Naive thymus-derived CD4-positive, alpha-beta T cell (primary cell): ENCODE measurements at regions of chr5 and their contacts with region 1.

Region 1: GRCh38 chr5:56200856-56201666 is 32.1 kb downstream of the ANKRD55 start:
- DNase-seq: peak; percentile 28 to 73 (median 59)
- ATAC-seq: peak; percentile 93
- H3K4me3 ChIP-seq: no peak overlapping the region
- H3K4me3 Mint-ChIP-seq: peak overlapping the region in 3 of 10 donors; percentile 2 to 27 (median 6)
- H3K27ac ChIP-seq: no peak overlapping the region
- H3K27ac Mint-ChIP-seq: peak overlapping the region in 7 of 9 donors; percentile 9 to 77 (median 63)
- H3K4me1 ChIP-seq: peaks cover 0 to 9% of the 10 kb centered on the region in 2 donors
- H3K4me1 Mint-ChIP-seq: peaks cover 17 to 34% (median 29%) of the 10 kb centered on the region in 7 donors
- H3K27me3 ChIP-seq: no peaks in the 10 kb centered on the region
- H3K27me3 Mint-ChIP-seq: no peaks in the 10 kb centered on the region

Region 2: GRCh38 chr5:55172051-55172899 is 1028.8 kb before region 1 on chr5:
- CTCF ChIA-PET with region 1: no interaction called
- POLR2A ChIA-PET with region 1: no interaction called
- intact Hi-C with region 1: loop called in 1 of 2 experiments (anchors 5 kb)
- DNase-seq: peak in 8 of 9 donors; percentile 53 to 81 (median 75)
- ATAC-seq: peak; percentile 80
- H3K4me3 ChIP-seq: peak overlapping the region; percentile 42
- H3K4me3 Mint-ChIP-seq: peak overlapping the region; percentile 78 to 93 (median 86)
- H3K27ac ChIP-seq: no peak overlapping the region
- H3K27ac Mint-ChIP-seq: peak overlapping the region in 4 of 9 donors; percentile 4 to 83 (median 57)
- H3K4me1 ChIP-seq: peaks cover 14 to 25% of the 10 kb centered on the region in 2 donors
- H3K4me1 Mint-ChIP-seq: peaks cover 23 to 45% (median 35%) of the 10 kb centered on the region in 7 donors
- H3K27me3 ChIP-seq: peaks cover 25 to 42% of the 10 kb centered on the region in 2 donors
- H3K27me3 Mint-ChIP-seq: peaks cover 73 to 88% (median 78%) of the 10 kb centered on the region in 5 donors

Region 3: DNA sequence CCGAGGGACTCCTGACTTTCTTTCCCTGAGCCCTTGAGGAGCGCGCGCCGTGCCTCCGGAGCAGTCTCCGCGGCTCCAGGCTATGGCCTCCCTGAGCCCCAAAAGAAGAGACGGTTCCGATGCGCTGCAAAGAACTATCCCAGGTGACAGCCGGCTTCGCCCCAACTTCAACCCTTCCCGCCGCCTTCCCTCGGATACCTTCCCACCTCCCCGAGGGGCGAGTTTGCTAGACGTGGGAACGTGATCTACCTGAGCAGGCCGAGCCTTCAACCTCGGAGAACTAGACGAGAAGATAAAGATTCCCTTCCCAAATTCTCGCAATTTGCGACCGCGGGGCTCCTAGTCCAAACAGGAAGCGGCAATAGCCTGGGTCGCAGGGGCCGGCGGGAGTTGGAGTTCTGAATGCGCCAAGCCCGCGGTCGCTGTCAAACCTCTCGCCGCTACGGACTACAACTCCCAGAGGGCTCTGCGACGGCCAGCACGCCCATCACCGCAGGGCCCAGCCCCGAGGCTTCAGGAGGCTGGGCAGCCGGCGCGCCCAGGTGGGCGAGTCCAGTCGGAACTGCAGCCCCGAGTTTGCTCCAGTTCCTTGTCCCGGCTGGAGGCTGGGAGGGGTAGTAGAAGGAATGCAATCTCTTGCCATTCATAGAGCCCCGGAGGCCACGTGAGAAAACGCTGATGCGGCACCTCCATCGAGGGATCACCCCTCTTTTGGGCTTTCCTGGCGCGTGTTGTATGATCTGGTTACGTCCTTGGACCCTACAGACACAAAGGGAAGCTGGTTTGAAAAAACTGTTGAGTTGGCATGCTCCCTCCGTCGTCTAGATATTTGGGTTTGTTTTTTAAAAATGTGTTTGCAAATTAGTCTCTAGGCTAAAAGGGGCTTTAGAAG is 488.8 kb before region 1 on chr5 and contains the start of gene SLC38A9:
- CTCF ChIA-PET with region 1: no interaction called
- POLR2A ChIA-PET with region 1: no interaction called
- intact Hi-C with region 1: loop called in 1 of 2 experiments (anchors 5 kb)
- DNase-seq: peak; percentile 82 to 91 (median 90)
- ATAC-seq: peak; percentile 100
- H3K4me3 ChIP-seq: peak within 1 kb of the TSS; percentile 87
- H3K4me3 Mint-ChIP-seq: peak within 1 kb of the TSS; percentile 94 to 99 (median 98)
- H3K27ac ChIP-seq: peak within 1 kb of the TSS; percentile 72
- H3K27ac Mint-ChIP-seq: peak within 1 kb of the TSS; percentile 76 to 97 (median 91)
- H3K4me1 ChIP-seq: peaks cover 12 to 16% of the 10 kb centered on the region in 2 donors
- H3K4me1 Mint-ChIP-seq: peaks cover 20 to 40% (median 29%) of the 10 kb centered on the region in 7 donors
- H3K27me3 ChIP-seq: no peaks in the 10 kb centered on the region
- H3K27me3 Mint-ChIP-seq: peaks cover 0 to 3% (median 0%) of the 10 kb centered on the region in 5 donors
- total RNA-seq, gene SLC38A9: 17.7 to 32.6 (median 30.4) TPM

Region 4: DNA sequence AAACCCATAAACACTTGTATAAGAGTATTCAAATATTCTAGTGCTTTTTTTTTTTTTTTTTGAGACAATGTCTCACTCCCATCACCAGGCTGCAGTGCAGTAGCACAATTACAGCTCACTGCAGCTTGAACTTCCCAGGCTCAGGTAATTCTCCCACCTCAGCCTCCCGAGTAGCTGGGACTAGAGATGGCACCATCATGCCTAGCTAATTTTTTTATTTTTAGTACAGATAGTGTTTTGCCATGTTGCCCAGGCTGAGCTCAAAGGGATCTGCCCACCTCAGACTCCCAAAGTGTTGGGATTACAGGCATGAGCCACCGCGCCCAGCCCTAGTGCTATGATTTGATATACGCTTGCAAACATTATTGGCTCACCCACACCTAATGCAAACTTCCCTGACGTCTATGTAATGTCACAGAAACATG is 218.1 kb before region 1 on chr5:
- CTCF ChIA-PET with region 1: interaction called, 120 read pairs
- POLR2A ChIA-PET with region 1: interaction called, 21 read pairs
- intact Hi-C with region 1: loop called (anchors 1 kb)
- DNase-seq: peak in 7 of 9 donors; percentile 42 to 63 (median 53)
- ATAC-seq: peak; percentile 46
- H3K4me3 ChIP-seq: peak overlapping the region; percentile 44
- H3K4me3 Mint-ChIP-seq: peak overlapping the region; percentile 48 to 96 (median 84)
- H3K27ac ChIP-seq: peak overlapping the region; percentile 67
- H3K27ac Mint-ChIP-seq: peak overlapping the region; percentile 24 to 98 (median 85)
- H3K4me1 ChIP-seq: peaks cover 0 to 63% of the 10 kb centered on the region in 2 donors
- H3K4me1 Mint-ChIP-seq: peaks cover 37 to 94% (median 84%) of the 10 kb centered on the region in 7 donors
- H3K27me3 ChIP-seq: no peaks in the 10 kb centered on the region
- H3K27me3 Mint-ChIP-seq: no peaks in the 10 kb centered on the region

Region 5: GRCh38 chr5:56056875-56057274 is 144.2 kb before region 1 on chr5:
- CTCF ChIA-PET with region 1: interaction called, 5 read pairs
- POLR2A ChIA-PET with region 1: no interaction called
- intact Hi-C with region 1: loop called in 1 of 2 experiments (anchors 5 kb)
- DNase-seq: no peak
- ATAC-seq: no peak
- H3K4me3 ChIP-seq: peak overlapping the region; percentile 21
- H3K4me3 Mint-ChIP-seq: peak overlapping the region in 8 of 10 donors; percentile 55 to 83 (median 68)
- H3K27ac ChIP-seq: peak overlapping the region; percentile 60
- H3K27ac Mint-ChIP-seq: peak overlapping the region; percentile 44 to 99 (median 90)
- H3K4me1 ChIP-seq: peaks cover 8 to 96% of the 10 kb centered on the region in 2 donors
- H3K4me1 Mint-ChIP-seq: peaks cover 52 to 94% (median 76%) of the 10 kb centered on the region in 7 donors
- H3K27me3 ChIP-seq: no peaks in the 10 kb centered on the region
- H3K27me3 Mint-ChIP-seq: peaks cover 0 to 6% (median 0%) of the 10 kb centered on the region in 5 donors

Region 6: DNA sequence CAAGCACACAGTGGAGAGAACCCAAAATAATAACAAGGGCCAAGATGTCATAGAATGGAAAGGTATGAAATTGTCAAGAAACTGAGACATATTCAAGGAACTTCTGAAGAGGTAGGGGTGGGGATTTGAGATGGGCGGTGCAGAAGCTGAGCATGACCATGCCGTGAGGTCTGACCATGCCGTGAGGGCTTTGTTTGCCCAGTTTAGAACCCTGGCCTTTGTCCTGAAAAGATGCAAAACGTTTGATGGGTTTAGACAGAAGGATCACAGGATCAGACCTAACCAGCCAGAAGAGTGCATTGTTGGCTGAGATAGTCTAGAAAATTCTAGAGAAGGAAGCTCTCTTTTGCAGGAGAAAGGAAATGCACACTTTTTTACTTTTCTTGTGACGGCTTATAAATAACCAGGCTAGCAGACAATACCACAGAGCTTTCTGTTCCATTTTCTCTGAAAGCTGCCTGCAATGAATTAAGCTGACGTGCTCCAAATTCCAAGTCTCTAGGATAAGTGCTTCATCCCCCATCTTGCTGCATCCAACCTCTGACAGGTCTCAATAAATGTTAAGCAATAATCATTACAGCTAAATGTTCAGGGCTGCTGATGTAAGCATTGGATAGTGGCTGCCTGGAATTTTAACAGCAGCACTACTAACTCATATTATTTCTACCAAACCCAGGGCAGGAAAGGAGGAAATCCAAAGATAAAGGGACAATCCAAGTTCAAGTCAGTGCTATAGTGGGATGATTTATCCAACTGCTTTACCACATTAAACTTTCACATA is 95.4 kb before region 1 on chr5:
- CTCF ChIA-PET with region 1: interaction called, 23 read pairs
- POLR2A ChIA-PET with region 1: interaction called, 6 read pairs
- intact Hi-C with region 1: loop called in 1 of 2 experiments (anchors 2 kb)
- DNase-seq: peak in 2 of 9 donors; percentile 24 to 44
- ATAC-seq: no peak
- H3K4me3 ChIP-seq: no peak overlapping the region
- H3K4me3 Mint-ChIP-seq: peak overlapping the region; percentile 49 to 85 (median 70)
- H3K27ac ChIP-seq: peak overlapping the region; percentile 56
- H3K27ac Mint-ChIP-seq: peak overlapping the region; percentile 70 to 100 (median 90)
- H3K4me1 ChIP-seq: peaks cover 0 to 60% of the 10 kb centered on the region in 2 donors
- H3K4me1 Mint-ChIP-seq: peaks cover 33 to 95% (median 73%) of the 10 kb centered on the region in 7 donors
- H3K27me3 ChIP-seq: no peaks in the 10 kb centered on the region
- H3K27me3 Mint-ChIP-seq: no peaks in the 10 kb centered on the region

Region 7: DNA sequence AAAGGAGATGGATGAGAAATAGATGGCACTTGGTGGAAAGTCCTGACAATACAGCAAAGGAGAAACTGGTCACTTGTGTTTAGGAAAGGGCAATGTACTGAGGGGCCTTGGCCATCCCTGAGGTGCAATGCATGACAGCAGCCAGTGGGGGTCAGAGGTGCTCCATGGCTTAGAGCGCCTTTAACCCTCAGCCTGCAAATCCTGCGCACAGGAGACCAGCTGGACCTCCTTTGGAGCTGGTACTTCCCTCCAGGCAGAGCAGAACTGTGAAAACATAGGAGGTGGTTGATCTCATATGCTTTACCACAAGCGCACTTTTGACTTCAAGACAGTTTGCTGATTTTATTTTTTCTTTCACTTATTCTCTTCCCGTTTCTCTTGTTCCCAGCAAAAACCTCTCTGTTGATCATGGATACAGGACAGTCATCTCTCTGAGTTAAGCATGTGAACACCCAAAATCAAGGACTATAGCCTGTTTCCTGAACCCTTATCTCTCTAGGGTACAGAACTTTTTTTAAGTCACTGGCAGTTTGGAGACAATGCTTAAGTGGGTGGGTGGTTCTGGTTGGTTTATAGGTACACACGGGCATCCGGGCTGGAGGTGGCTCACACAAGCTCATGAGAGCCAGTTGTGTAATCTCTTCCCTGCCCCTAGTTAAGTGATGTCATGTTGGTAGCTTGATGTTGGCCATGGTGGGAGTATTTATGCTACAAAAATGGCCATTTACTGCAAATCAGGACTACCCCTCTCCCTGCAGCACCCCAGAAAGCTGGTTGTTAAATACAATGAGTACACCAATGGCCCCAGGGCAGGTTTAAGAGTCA is 69.7 kb after region 1 on chr5:
- CTCF ChIA-PET with region 1: no interaction called
- POLR2A ChIA-PET with region 1: no interaction called
- intact Hi-C with region 1: loop called in 1 of 2 experiments (anchors 2 kb)
- DNase-seq: peak; percentile 47 to 73 (median 68)
- ATAC-seq: peak; percentile 97
- H3K4me3 ChIP-seq: no peak overlapping the region
- H3K4me3 Mint-ChIP-seq: peak overlapping the region; percentile 37 to 88 (median 76)
- H3K27ac ChIP-seq: no peak overlapping the region
- H3K27ac Mint-ChIP-seq: peak overlapping the region in 7 of 9 donors; percentile 44 to 86 (median 67)
- H3K4me1 ChIP-seq: peaks cover 0 to 9% of the 10 kb centered on the region in 2 donors
- H3K4me1 Mint-ChIP-seq: peaks cover 12 to 33% (median 21%) of the 10 kb centered on the region in 7 donors
- H3K27me3 ChIP-seq: no peaks in the 10 kb centered on the region
- H3K27me3 Mint-ChIP-seq: peaks cover 0 to 6% (median 0%) of the 10 kb centered on the region in 5 donors

Region 8: GRCh38 chr5:56676091-56676768 is 475.2 kb after region 1 on chr5:
- CTCF ChIA-PET with region 1: no interaction called
- POLR2A ChIA-PET with region 1: no interaction called
- intact Hi-C with region 1: no loop called
- DNase-seq: no peak
- ATAC-seq: no peak
- H3K4me3 ChIP-seq: no peak overlapping the region
- H3K4me3 Mint-ChIP-seq: no peak overlapping the region
- H3K27ac ChIP-seq: no peak overlapping the region
- H3K27ac Mint-ChIP-seq: no peak overlapping the region
- H3K4me1 ChIP-seq: peaks cover 0 to 24% of the 10 kb centered on the region in 2 donors
- H3K4me1 Mint-ChIP-seq: peaks cover 25 to 51% (median 38%) of the 10 kb centered on the region in 7 donors
- H3K27me3 ChIP-seq: no peaks in the 10 kb centered on the region
- H3K27me3 Mint-ChIP-seq: peaks cover 0 to 2% (median 0%) of the 10 kb centered on the region in 5 donors